Activated B cell treated with CpG ODN at 0.5 μM for 24 hours (primary cell): ENCODE measurements at regions of chr2 and their contacts with region 1.

Region 1: DNA sequence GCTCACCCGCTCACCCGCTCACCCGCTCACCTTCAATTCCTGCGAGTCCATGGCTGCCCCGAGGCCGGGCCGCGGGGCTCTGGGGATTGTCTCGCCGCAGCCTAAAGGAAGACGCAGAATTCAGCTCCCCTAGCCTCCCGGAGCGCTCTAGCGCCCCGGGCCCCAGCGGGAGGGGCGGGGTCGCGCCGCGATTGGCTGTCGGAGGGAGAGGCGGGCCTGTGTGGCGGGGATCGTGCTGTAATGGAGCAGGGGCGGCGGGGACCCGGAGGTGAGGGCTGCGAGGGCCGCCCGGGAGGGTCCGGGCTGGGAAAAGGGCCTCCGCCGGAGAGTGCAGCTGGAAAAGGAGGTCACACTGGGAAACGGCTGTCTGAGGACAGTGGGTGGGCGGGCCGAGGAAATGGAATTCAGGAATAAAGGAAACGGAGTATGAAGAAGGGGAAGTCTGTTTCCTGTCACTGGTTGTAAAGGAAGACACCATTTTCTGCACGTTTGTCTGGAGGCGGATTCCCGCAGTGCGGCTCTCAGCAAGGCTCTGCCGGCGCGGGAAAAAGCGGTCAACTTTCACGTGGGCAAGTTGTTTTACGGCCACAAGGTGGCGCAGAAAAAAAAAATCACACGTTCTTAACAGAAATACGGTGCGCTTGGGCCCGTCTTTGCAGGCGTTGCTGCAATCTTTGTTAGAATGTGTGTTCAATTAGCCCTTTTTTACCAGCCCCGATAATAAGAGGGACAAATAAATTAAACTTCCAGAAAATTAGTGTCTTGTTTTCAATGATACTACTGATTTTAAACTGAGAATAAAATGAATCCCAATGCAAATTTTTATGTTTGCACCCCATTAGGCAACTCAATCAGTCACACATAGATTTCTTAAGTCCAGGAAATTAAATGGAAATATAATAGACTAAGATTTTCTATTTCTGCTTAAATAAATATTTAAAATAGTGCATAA is at the start of gene TTC21B:
- DNase-seq: peak; percentile 92
- ATAC-seq: peak; percentile 96
- H3K4me3 Mint-ChIP-seq: no peak within 1 kb of the TSS
- H3K27ac Mint-ChIP-seq: peak within 1 kb of the TSS; percentile 56
- H3K4me1 Mint-ChIP-seq: peaks cover 11% of the 10 kb centered on the region
- H3K27me3 Mint-ChIP-seq: no peaks in the 10 kb centered on the region
- CTCF ChIP-seq: no peak
- total RNA-seq, gene TTC21B: 24.9 and 29.2 TPM in 2 replicates

Region 2: GRCh38 chr2:165015052-165015642 is 938.8 kb before region 1 on chr2:
- CTCF ChIA-PET with region 1: no interaction called
- POLR2A ChIA-PET with region 1: interaction called, 4 read pairs
- intact Hi-C with region 1: loop called (anchors 2 kb)
- DNase-seq: no peak
- ATAC-seq: peak; percentile 35
- H3K4me3 Mint-ChIP-seq: no peak overlapping the region
- H3K27ac Mint-ChIP-seq: no peak overlapping the region
- H3K4me1 Mint-ChIP-seq: no peaks in the 10 kb centered on the region
- H3K27me3 Mint-ChIP-seq: no peaks in the 10 kb centered on the region
- CTCF ChIP-seq: peak; percentile 82

Region 3: GRCh38 chr2:165293440-165294353 is 660.2 kb before region 1 on chr2:
- CTCF ChIA-PET with region 1: no interaction called
- POLR2A ChIA-PET with region 1: no interaction called
- intact Hi-C with region 1: loop called (anchors 10 kb)
- DNase-seq: no peak
- ATAC-seq: peak; percentile 100
- H3K4me3 Mint-ChIP-seq: no peak overlapping the region
- H3K27ac Mint-ChIP-seq: no peak overlapping the region
- H3K4me1 Mint-ChIP-seq: peaks cover 4% of the 10 kb centered on the region
- H3K27me3 Mint-ChIP-seq: peaks cover 7% of the 10 kb centered on the region
- CTCF ChIP-seq: no peak

Region 4: DNA sequence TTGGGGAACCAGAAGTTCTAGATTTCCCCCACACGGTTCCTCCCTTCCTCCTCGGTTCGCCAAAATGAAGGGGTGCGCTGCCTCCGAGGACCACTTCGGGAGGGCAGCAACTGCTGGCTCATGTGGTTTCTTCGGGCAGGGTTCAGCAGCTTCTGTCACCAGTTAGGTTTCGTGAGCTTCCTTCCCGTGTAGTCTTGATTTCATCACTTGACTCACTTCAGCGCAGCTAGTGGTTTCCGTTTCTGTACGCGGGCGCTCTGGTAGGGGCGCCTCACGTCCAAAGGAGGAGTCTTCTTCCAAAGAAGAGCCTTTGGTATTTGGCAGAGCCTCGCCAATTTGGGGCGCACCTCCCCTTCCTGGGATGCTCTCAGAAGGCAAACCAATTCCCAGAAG is 159.4 kb before region 1 on chr2:
- CTCF ChIA-PET with region 1: no interaction called
- POLR2A ChIA-PET with region 1: interaction called, 3 read pairs
- intact Hi-C with region 1: loop called (anchors 1 kb)
- DNase-seq: no peak
- ATAC-seq: peak; percentile 87
- H3K4me3 Mint-ChIP-seq: peak overlapping the region; percentile 97
- H3K27ac Mint-ChIP-seq: peak overlapping the region; percentile 96
- H3K4me1 Mint-ChIP-seq: peaks cover 36% of the 10 kb centered on the region
- H3K27me3 Mint-ChIP-seq: no peaks in the 10 kb centered on the region
- CTCF ChIP-seq: no peak

Region 5: GRCh38 chr2:165804735-165805134 is 149.2 kb before region 1 on chr2:
- CTCF ChIA-PET with region 1: no interaction called
- POLR2A ChIA-PET with region 1: no interaction called
- intact Hi-C with region 1: no loop called
- DNase-seq: no peak
- ATAC-seq: no peak
- H3K4me3 Mint-ChIP-seq: no peak overlapping the region
- H3K27ac Mint-ChIP-seq: no peak overlapping the region
- H3K4me1 Mint-ChIP-seq: no peaks in the 10 kb centered on the region
- H3K27me3 Mint-ChIP-seq: no peaks in the 10 kb centered on the region
- CTCF ChIP-seq: no peak

Region 6: DNA sequence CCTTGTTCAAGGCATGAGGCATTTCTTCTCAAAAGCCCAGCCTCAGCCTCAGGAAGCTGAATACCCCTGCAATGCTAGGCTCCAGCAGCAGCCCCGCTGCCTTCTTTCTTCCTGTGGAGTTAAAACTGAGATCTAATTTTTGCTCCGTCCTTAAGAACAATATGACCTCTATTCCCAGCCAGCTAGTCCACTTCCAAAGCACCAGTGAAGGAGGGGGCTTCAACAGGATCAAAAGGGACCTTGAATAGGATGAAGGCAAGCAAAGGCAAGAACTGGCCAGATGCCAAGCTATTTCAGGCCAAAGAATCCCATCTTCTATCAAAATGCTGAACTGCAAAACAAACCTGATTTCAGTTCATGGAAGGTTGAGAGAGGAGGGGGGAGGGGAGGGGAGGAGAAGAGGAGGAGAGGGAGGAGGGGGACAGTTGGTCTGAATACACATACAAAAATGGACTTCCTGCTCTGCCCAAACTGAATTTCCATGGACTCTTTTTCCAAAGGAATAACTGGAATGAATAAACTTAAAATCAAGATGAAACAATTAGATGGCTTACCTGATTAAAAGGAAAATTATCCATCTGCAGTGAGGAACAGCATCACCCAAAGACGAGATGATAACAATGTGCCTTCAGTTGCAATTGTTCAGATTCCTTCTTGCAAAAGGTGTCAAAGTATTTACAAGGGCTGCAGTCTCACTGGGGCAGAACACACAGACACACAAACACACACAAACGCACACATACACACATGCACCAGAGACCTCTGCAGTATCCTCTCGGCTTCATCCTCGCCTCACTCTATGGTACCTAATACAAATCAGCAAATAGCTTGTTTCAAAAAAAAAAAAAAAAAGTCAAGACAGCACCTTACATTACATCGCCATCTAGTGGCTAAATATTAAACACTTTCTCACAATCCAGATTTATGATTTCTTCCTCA is 173.6 kb after region 1 on chr2 and contains the start of gene SCN1A:
- CTCF ChIA-PET with region 1: interaction called, 9 read pairs
- POLR2A ChIA-PET with region 1: interaction called, 4 read pairs
- intact Hi-C with region 1: loop called (anchors 1 kb)
- DNase-seq: no peak
- ATAC-seq: no peak
- H3K4me3 Mint-ChIP-seq: no peak within 1 kb of the TSS
- H3K27ac Mint-ChIP-seq: no peak within 1 kb of the TSS
- H3K4me1 Mint-ChIP-seq: peaks cover 2% of the 10 kb centered on the region
- H3K27me3 Mint-ChIP-seq: peaks cover 13% of the 10 kb centered on the region
- CTCF ChIP-seq: no peak
- total RNA-seq, gene SCN1A: not detected in 2 replicates